Heart right ventricle (tissue), 16 donors: ENCODE measurements at regions of chr3 and their contacts with region 1.

Region 1: GRCh38 chr3:32302601-32303398 is 64.3 kb downstream of the CMTM8 start:
- DNase-seq: no peak
- ATAC-seq: peak in 2 of 8 donors; percentile 32 to 52
- H3K4me3 ChIP-seq: no peak overlapping the region
- H3K27ac ChIP-seq: peak overlapping the region in 6 of 10 donors; percentile 10 to 64 (median 32)
- H3K4me1 ChIP-seq: peaks cover 0 to 45% (median 10%) of the 10 kb centered on the region in 9 donors
- H3K27me3 ChIP-seq: no peaks in the 10 kb centered on the region
- CTCF ChIP-seq: no peak

Region 2: DNA sequence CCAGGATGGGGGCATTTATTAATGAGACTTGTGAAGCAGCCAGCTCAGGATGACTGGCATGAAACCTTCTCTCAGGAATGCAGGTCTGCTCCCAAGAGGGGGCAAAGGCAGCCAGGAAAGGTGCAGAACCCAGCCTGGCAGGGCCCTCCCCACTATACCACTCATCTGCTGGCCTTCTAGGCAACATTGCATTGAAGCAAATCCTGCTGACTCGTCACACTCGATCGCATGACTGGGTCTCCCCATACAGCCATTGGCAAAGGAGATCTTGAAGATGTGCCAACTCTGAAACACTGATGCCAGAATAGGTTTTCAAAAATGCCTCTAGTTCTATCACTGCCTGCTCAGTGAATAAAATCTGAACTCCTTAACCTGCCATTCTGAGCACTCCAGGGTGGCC is 23.2 kb after region 1 on chr3:
- intact Hi-C with region 1: loop called in 1 of 10 experiments (anchors 2 kb)
- DNase-seq: no peak
- ATAC-seq: no peak
- H3K4me3 ChIP-seq: no peak overlapping the region
- H3K27ac ChIP-seq: no peak overlapping the region
- H3K4me1 ChIP-seq: peaks cover 0 to 30% (median 7%) of the 10 kb centered on the region in 9 donors
- H3K27me3 ChIP-seq: no peaks in the 10 kb centered on the region
- CTCF ChIP-seq: no peak